Dendritic cell treated with granulocyte-macrophage colony-stimulating factor and Interleukin-4, amounts not matched to agents 40 ng/mL and 50 ng/mL, for 4 days (primary cell): ENCODE measurements at regions of chr11 and their contacts with region 1.

Region 1: GRCh38 chr11:65083834-65084597 is at the starts of genes CDCA5 and ZFPL1:
- H3K4me3 Mint-ChIP-seq: peak within 1 kb of the TSS; percentile 97
- H3K27ac Mint-ChIP-seq: peak within 1 kb of the TSS; percentile 95
- H3K4me1 Mint-ChIP-seq: peaks cover 50% of the 10 kb centered on the region
- H3K27me3 Mint-ChIP-seq: no peaks in the 10 kb centered on the region

Region 2: GRCh38 chr11:65003282-65003681 is 80.7 kb before region 1 on chr11:
- intact Hi-C with region 1: no loop called
- H3K4me3 Mint-ChIP-seq: no peak overlapping the region
- H3K27ac Mint-ChIP-seq: no peak overlapping the region
- H3K4me1 Mint-ChIP-seq: peaks cover 7% of the 10 kb centered on the region
- H3K27me3 Mint-ChIP-seq: peaks cover 8% of the 10 kb centered on the region

Region 3: DNA sequence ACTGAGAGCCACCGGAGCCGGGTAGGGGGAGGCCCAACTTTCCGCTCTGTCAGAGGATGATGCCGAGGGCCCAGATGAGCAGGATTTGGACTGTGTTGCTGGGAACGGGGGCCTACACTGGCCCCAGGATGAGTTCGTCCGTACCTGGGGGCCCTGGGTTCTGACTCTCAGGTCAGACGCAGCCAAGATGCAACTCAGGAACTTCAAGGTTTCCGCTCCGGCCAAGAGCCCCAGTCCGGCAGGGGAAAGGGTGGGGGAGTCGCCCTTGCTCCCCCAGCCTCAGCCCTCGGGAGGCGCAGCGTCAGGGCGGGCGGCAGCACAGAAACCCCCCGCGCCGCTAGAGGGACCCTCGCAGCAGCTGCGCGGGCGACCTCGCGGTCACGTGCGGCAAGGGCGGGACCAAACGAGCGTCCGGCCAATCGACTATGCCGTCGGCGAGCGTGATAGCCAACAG is 70.3 kb before region 1 on chr11:
- intact Hi-C with region 1: loop called (anchors 5 kb)
- H3K4me3 Mint-ChIP-seq: peak overlapping the region; percentile 89
- H3K27ac Mint-ChIP-seq: peak overlapping the region; percentile 97
- H3K4me1 Mint-ChIP-seq: peaks cover 31% of the 10 kb centered on the region
- H3K27me3 Mint-ChIP-seq: no peaks in the 10 kb centered on the region

Region 4: GRCh38 chr11:65040847-65041621 is 43.0 kb before region 1 on chr11 and contains the start of gene SAC3D1:
- intact Hi-C with region 1: loop called (anchors 5 kb)
- H3K4me3 Mint-ChIP-seq: peak within 1 kb of the TSS; percentile 80
- H3K27ac Mint-ChIP-seq: peak within 1 kb of the TSS; percentile 94
- H3K4me1 Mint-ChIP-seq: peaks cover 59% of the 10 kb centered on the region
- H3K27me3 Mint-ChIP-seq: peaks cover 1% of the 10 kb centered on the region

Region 5: DNA sequence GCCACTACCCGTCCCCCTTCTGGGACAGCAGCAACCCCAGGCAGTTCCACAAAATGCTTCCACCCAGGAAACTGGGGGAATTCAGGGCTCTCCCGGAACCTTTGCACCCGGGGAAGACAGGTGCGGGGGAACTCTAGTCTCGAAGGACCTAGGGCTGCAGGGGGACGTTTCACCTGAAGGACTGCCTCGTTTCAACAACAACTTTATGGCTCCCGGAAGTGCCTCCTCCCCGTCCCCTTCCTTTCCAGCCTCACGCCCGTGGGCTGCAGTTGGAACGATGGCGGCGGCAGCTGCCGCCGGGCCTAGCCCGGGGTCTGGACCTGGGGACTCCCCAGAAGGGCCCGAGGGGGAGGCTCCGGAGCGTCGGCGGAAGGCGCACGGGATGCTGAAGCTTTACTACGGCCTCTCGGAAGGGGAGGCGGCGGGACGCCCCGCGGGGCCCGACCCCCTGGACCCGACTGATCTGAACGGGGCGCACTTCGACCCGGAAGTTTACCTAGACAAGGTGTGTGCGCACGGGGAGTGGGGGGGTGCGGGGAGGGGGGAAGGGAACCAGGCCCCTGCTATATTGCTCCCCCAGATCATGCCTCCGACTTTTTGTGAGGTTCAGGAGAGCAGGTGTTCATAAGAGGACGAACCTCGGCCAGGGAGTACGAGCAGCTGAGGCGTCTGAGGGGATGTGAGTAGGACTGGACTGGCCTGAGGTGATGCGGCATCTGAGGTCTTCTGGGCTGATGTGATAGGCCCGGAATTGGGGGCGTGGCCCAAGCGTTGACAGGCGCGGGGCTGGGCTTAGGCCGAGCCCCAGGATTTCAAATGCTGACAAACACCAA is 12.2 kb after region 1 on chr11 and contains the start of gene VPS51:
- intact Hi-C with region 1: loop called (anchors 1 kb)
- H3K4me3 Mint-ChIP-seq: peak within 1 kb of the TSS; percentile 79
- H3K27ac Mint-ChIP-seq: peak within 1 kb of the TSS; percentile 79
- H3K4me1 Mint-ChIP-seq: peaks cover 18% of the 10 kb centered on the region
- H3K27me3 Mint-ChIP-seq: no peaks in the 10 kb centered on the region